ENCODE measurements at regions of chr14 and their contacts with region 1.

Region 1: DNA sequence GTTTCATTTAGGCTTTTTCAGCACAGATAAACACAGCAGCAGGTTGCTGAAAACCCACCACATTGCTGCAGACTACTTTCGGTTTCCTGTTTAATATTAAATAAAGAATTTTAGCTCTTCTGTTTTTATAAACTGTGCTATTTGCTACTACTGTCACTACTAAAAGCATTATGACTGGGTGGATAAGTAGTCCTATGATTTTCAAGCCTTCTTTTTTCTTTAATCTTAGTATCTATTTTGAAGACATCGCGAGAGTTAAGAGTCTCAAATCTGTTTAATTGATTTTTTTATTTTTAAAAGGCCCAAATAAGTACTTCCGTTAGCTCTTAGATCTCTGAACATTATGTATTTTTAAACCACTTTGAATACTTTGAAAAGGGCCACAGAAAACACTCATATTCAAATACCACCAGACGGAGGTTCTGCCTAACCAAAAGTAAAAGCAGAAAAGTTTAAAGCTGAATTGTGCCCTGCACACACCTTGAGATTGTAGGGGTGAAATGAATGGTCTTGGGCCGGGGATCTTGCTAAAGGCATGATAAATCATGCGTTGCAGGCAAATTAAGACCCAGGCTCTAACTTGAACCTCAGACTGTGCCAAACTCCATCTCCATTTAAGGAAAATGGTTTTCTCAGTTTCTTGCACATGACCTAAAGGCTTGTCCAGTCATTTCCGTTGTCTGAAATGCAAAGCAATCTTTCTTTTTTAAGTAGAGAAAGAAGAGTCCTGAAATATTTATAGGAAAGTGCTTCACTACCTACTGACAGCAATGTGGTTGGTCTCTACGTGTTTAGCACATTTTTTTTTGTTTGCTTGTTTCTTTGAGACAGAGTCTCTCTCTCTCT is 13.6 kb upstream of the FOXN3 start:
- DNase-seq: peak; percentile 33
- H3K4me3 Mint-ChIP-seq: peak overlapping the region; percentile 56
- H3K27ac Mint-ChIP-seq: peak overlapping the region; percentile 88
- H3K4me1 Mint-ChIP-seq: peaks cover 35% of the 10 kb centered on the region
- H3K27me3 Mint-ChIP-seq: no peaks in the 10 kb centered on the region
- CTCF ChIP-seq: no peak

Region 2: GRCh38 chr14:89178802-89179535 is 251.6 kb before region 1 on chr14:
- CTCF ChIA-PET with region 1: no interaction called
- POLR2A ChIA-PET with region 1: no interaction called
- intact Hi-C with region 1: no loop called
- DNase-seq: no peak
- H3K4me3 Mint-ChIP-seq: no peak overlapping the region
- H3K27ac Mint-ChIP-seq: no peak overlapping the region
- H3K4me1 Mint-ChIP-seq: no peaks in the 10 kb centered on the region
- H3K27me3 Mint-ChIP-seq: no peaks in the 10 kb centered on the region
- CTCF ChIP-seq: no peak

Region 3: DNA sequence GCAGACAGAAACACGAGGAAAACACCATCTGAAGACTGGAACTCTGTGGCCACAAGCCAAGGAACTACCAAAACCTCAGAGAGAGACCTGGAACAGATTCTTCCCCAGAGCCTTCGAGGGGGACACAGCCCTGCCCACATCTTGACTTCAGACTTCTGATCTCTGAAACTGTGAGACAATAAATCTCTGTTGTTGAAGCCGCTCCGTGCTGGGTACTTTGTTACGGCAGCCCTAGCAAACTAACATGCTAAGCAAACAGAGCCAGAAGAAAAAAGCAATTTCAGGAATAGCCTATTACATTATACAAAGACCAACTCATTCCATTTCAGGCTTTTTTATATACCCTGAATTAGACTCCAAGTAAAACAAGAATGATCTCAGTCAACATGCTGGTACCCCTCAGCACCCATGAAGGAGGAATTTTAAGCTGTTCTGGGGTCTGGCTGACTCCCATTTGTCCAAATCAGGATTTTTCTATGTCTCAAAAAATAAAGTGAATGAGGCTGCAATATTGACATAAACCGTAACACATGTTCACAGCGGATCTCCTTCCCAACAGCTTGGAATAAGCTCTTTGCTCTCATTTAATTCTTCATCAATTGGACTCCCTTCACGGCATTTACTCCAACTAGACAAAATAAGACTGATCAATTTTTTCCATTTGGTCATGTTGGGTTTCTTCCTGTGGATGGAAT is 203.7 kb before region 1 on chr14:
- CTCF ChIA-PET with region 1: no interaction called
- POLR2A ChIA-PET with region 1: no interaction called
- intact Hi-C with region 1: no loop called
- DNase-seq: no peak
- H3K4me3 Mint-ChIP-seq: no peak overlapping the region
- H3K27ac Mint-ChIP-seq: no peak overlapping the region
- H3K4me1 Mint-ChIP-seq: no peaks in the 10 kb centered on the region
- H3K27me3 Mint-ChIP-seq: no peaks in the 10 kb centered on the region
- CTCF ChIP-seq: no peak

Region 4: DNA sequence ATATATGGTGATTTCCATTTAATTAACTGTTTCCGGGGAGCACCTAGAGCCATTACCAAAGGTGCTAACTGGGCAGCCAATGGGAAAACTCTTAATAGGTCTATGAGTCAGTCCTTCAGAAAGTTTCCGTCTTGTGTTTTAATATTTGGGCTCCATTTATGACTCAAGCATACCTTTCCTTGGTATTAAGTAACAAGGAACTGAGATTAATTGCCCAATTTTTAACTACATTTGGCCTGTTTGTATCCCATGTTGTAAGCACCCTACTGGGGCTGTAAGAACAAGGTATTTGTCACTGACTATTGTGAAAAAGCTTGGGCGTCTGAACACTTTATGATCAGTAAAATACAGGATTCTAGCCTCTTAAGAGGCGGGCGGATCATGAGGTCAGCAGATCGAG is 49.2 kb after region 1 on chr14:
- CTCF ChIA-PET with region 1: interaction called, 3 read pairs
- POLR2A ChIA-PET with region 1: interaction called, 11 read pairs
- intact Hi-C with region 1: no loop called
- DNase-seq: peak; percentile 76
- H3K4me3 Mint-ChIP-seq: no peak overlapping the region
- H3K27ac Mint-ChIP-seq: peak overlapping the region; percentile 42
- H3K4me1 Mint-ChIP-seq: no peaks in the 10 kb centered on the region
- H3K27me3 Mint-ChIP-seq: no peaks in the 10 kb centered on the region
- CTCF ChIP-seq: no peak

Region 5: GRCh38 chr14:89504602-89505313 is 74.1 kb after region 1 on chr14:
- CTCF ChIA-PET with region 1: no interaction called
- POLR2A ChIA-PET with region 1: interaction called, 10 read pairs
- intact Hi-C with region 1: no loop called
- DNase-seq: no peak
- H3K4me3 Mint-ChIP-seq: no peak overlapping the region
- H3K27ac Mint-ChIP-seq: peak overlapping the region; percentile 75
- H3K4me1 Mint-ChIP-seq: peaks cover 27% of the 10 kb centered on the region
- H3K27me3 Mint-ChIP-seq: no peaks in the 10 kb centered on the region
- CTCF ChIP-seq: no peak

Region 6: GRCh38 chr14:89618811-89619551 is 188.4 kb after region 1 on chr14:
- CTCF ChIA-PET with region 1: no interaction called
- POLR2A ChIA-PET with region 1: interaction called, 18 read pairs
- intact Hi-C with region 1: no loop called
- DNase-seq: peak; percentile 57
- H3K4me3 Mint-ChIP-seq: peak overlapping the region; percentile 77
- H3K27ac Mint-ChIP-seq: peak overlapping the region; percentile 39
- H3K4me1 Mint-ChIP-seq: peaks cover 7% of the 10 kb centered on the region
- H3K27me3 Mint-ChIP-seq: no peaks in the 10 kb centered on the region
- CTCF ChIP-seq: no peak

Measured in MCF 10A (cell line).